ENCODE measurements at regions of chr7 and their contacts with region 1.

Region 1: GRCh38 chr7:76393116-76394031 is 16.1 kb downstream of the SSC4D start:
- DNase-seq: peak; percentile 97 to 98
- ATAC-seq: peak; percentile 94
- H3K4me3 ChIP-seq: peak overlapping the region in 1 of 2 donors; percentile 43
- H3K27ac ChIP-seq: peak overlapping the region in 1 of 2 donors; percentile 68
- H3K4me1 ChIP-seq: no peaks in the 10 kb centered on the region
- H3K27me3 ChIP-seq: no peaks in the 10 kb centered on the region

Region 2: DNA sequence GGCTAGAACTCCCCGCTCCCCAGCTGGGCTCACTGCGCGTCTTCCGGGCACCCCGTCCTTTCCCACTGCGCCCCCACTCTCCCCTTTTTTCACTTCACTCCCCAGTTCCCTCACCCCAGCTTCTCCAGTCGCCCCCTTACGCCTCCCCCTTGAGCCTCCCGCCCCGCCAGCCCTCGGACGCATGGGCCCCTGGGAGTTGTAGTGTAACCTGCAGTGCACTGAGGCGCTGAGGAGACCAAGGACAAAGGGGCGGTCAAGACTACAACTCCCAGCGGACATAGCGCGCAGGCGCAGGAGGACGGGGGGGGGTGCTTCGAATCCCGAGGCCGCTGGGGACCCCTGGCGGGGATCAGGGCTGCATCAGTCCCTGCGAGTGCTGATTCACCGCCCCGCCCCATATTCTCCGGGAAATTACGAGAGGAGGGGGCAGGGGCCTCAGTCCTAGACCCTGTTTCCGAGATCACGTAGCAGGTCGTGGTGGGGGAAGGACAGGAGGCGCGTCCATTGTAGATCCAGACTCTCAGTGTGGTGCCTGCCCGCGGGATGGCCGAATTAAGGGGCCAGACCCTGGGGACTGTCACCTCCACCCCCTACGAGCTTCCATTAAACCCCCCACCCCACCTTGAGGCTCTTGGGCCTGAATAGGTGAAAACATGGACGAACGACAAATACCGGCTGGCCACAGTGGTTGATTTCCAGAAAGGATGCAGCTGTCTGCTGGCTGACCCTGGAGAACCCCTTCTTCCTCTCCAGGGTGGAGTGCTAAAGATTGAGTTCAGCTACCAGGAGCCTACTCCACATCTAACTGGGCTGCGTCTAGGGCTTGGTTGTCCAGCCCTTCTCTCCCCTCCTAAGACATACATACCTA is 34.0 kb before region 1 on chr7:
- intact Hi-C with region 1: loop called in 1 of 2 experiments (anchors 2 kb)
- DNase-seq: peak; percentile 98 to 99
- ATAC-seq: peak; percentile 98
- H3K4me3 ChIP-seq: peak overlapping the region; percentile 48 to 60
- H3K27ac ChIP-seq: peak overlapping the region in 1 of 2 donors; percentile 81
- H3K4me1 ChIP-seq: peaks cover 0 to 2% of the 10 kb centered on the region in 2 donors
- H3K27me3 ChIP-seq: no peaks in the 10 kb centered on the region

Measured in aorta (tissue), 5 donors.